H1 (cell line): ENCODE measurements at regions of chr1 and their contacts with region 1.

Region 1: DNA sequence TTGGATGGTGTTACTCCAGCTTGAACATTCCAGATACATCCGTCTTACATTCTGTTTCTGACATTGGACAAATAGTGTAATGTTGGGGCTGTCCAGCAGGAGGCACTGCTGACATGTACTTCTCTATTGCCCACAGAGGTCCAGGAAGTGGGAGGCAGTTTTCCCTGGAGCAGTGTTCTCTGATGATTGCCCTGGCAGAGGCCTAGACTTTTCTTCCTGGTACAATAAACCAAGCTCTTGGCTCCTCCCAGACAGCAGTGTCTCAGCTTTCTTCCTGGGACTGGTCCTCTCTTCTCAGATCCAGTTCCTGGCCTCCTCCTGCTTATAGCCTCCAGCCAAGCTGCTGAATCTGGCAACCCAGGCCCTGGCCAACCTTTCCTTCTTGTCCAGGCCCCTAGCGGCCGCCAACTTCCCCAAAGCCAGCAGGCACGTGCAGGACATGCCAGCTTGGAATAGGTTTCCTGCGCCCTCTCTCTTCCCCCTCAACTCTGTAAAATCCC is 14.9 kb upstream of the IFNLR1 start:
- DNase-seq: peak; percentile 56 to 93
- H3K4me3 ChIP-seq: no peak overlapping the region
- H3K27ac ChIP-seq: no peak overlapping the region
- H3K4me1 ChIP-seq: peaks cover 0 to 4% (median 2%) of the 10 kb centered on the region in 4 experiments; a peak in 2 of 7 replicates
- H3K27me3 ChIP-seq: no peaks in the 10 kb centered on the region
- CTCF ChIP-seq: peak; percentile 66 to 91 (median 83)
- EP300 ChIP-seq: no peak
- POLR2A ChIP-seq: no peak
- RAD21 ChIP-seq: peak; percentile 94 to 95

Region 2: GRCh38 chr1:24150234-24151174 is 51.5 kb before region 1 on chr1:
- CTCF ChIA-PET with region 1: interaction called, 85 read pairs
- POLR2A ChIA-PET with region 1: interaction called, 4 read pairs
- DNase-seq: peak; percentile 91 to 100
- H3K4me3 ChIP-seq: peak overlapping the region; percentile 19 to 58 (median 34); a peak in 6 of 8 replicates
- H3K27ac ChIP-seq: peak overlapping the region; percentile 97
- H3K4me1 ChIP-seq: peaks cover 3 to 23% (median 15%) of the 10 kb centered on the region in 4 experiments
- H3K27me3 ChIP-seq: no peaks in the 10 kb centered on the region
- CTCF ChIP-seq: peak; percentile 83 to 89 (median 88)
- EP300 ChIP-seq: no peak
- POLR2A ChIP-seq: peak; percentile 76 to 91
- RAD21 ChIP-seq: peak; percentile 55 to 70; a peak in 3 of 4 replicates

Region 3: GRCh38 chr1:24235921-24236781 is 34.2 kb after region 1 on chr1:
- CTCF ChIA-PET with region 1: interaction called, 14 read pairs
- POLR2A ChIA-PET with region 1: no interaction called
- DNase-seq: peak in 1 of 2 experiments; percentile 51
- H3K4me3 ChIP-seq: no peak overlapping the region
- H3K27ac ChIP-seq: no peak overlapping the region
- H3K4me1 ChIP-seq: peaks cover 0 to 6% (median 4%) of the 10 kb centered on the region in 4 experiments; a peak in 4 of 7 replicates
- H3K27me3 ChIP-seq: no peaks in the 10 kb centered on the region
- CTCF ChIP-seq: no peak
- EP300 ChIP-seq: no peak
- POLR2A ChIP-seq: no peak
- RAD21 ChIP-seq: no peak

Region 4: DNA sequence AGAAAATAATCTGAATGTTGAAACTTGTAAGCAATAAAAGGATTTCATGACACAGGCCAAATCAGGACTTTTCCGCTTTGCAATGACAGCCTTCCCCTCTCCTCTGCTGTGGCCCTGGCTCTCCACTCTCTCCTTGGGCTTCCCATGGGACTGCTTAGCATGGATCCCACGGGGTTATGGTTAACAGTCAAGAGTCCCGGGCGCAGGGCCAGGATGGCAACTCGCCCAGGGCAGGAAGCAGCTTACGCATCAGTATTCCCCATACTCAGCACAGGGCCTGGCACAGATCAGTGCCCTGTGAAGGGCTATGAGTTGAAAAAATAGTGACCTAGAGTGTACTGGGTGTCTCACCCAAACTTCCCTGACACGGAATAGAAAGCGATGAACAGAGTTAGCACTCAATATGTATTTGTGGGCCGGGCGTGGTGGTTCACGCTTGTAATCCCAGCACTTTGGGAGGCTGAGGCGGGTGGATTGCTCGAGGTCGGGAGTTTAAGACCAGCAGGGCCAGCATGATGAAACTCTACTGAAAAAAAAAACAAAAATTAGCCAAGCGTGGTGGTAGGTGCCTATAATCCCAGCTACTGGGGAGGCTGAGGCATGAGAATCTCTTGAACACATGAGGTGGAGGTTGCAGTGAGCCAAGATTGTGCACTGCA is 88.1 kb after region 1 on chr1:
- CTCF ChIA-PET with region 1: interaction called, 11 read pairs
- POLR2A ChIA-PET with region 1: no interaction called
- DNase-seq: no peak
- H3K4me3 ChIP-seq: no peak overlapping the region
- H3K27ac ChIP-seq: no peak overlapping the region
- H3K4me1 ChIP-seq: peaks cover 6 to 23% (median 11%) of the 10 kb centered on the region in 4 experiments
- H3K27me3 ChIP-seq: 0 out of 7 replicates have a peak, but pooled peaks cover 0 to 1% (median 0%) of the 10 kb centered on the region in 4 experiments
- CTCF ChIP-seq: no peak
- EP300 ChIP-seq: no peak
- POLR2A ChIP-seq: no peak
- RAD21 ChIP-seq: no peak

Region 5: GRCh38 chr1:24341260-24341659 is 139.3 kb after region 1 on chr1:
- CTCF ChIA-PET with region 1: interaction called, 27 read pairs
- POLR2A ChIA-PET with region 1: interaction called, 3 read pairs
- DNase-seq: no peak
- H3K4me3 ChIP-seq: no peak overlapping the region
- H3K27ac ChIP-seq: no peak overlapping the region
- H3K4me1 ChIP-seq: peaks cover 0 to 36% (median 24%) of the 10 kb centered on the region in 4 experiments; a peak in 6 of 7 replicates
- H3K27me3 ChIP-seq: no peaks in the 10 kb centered on the region
- CTCF ChIP-seq: no peak
- EP300 ChIP-seq: no peak
- POLR2A ChIP-seq: no peak
- RAD21 ChIP-seq: no peak

Region 6: DNA sequence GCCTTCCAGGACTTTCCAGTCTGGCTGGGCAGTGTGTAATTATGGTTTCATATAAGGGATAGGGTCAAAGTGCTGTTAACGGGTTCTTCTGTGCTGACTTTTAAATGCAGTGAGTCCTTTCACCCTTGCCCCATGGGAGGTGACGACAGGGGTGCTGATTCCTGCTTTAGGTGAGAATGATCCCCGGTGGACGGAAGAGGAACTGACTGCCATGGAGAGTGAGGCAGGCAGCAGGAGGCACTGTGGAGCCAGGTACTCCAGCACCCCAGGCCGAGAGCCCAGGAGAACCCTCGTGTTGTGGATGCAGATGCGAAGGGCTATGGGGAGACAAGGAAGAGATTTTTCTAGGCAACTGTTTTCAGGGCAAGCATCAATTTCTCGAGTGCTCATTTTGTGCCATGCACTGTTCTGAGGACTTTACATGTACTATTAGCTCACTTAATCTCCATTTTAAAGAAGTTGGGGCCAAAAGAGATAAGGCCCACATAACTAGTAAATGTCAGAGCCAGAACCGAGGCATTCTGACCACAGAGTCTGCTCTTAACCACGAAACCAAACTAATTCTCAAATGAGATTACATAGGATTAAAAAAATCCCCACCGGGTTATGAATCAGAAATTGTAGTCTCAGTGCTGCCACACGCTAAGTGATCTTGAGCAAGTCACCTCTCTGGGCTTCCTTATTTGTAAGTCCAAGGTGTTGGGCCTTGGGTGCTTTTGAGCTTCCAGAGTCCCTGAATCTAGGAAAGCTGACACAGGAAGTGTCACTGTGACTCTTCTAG is 183.4 kb after region 1 on chr1:
- CTCF ChIA-PET with region 1: interaction called, 465 read pairs
- POLR2A ChIA-PET with region 1: no interaction called
- DNase-seq: peak; percentile 47 to 77
- H3K4me3 ChIP-seq: no peak overlapping the region
- H3K27ac ChIP-seq: no peak overlapping the region
- H3K4me1 ChIP-seq: no peaks in the 10 kb centered on the region
- H3K27me3 ChIP-seq: no peaks in the 10 kb centered on the region
- CTCF ChIP-seq: peak; percentile 100
- EP300 ChIP-seq: no peak
- POLR2A ChIP-seq: no peak
- RAD21 ChIP-seq: peak; percentile 75 to 83

Region 7: DNA sequence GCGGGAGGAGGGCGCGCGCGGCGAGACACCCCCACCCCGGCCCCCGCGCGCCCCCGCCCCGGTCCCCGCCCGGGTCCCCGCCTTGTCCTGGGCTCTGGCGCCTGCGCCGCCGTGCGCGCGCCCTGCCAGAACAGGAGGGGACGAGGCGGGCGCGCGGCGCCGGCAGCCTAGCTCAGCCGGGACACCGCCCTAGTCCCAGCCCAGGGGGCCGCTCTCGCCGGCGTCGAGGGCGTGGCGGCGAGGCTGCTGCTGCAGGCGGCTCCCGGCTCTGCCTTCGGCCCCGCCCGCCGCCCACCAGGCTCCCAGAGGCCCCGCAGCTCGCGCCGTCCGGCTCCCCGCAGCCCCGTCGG is 300.7 kb after region 1 on chr1 and contains the start of gene RCAN3:
- CTCF ChIA-PET with region 1: no interaction called
- POLR2A ChIA-PET with region 1: no interaction called
- DNase-seq: peak; percentile 59 to 88
- H3K4me3 ChIP-seq: peak within 1 kb of the TSS; percentile 80 to 95 (median 86)
- H3K27ac ChIP-seq: no peak within 1 kb of the TSS
- H3K4me1 ChIP-seq: peaks cover 2 to 21% (median 11%) of the 10 kb centered on the region in 4 experiments; a peak in 6 of 7 replicates
- H3K27me3 ChIP-seq: peaks cover 0 to 7% (median 0%) of the 10 kb centered on the region in 4 experiments; a peak in 3 of 7 replicates
- CTCF ChIP-seq: no peak
- EP300 ChIP-seq: no peak
- POLR2A ChIP-seq: peak in 1 of 2 experiments; percentile 38; a peak in 1 of 3 replicates
- RAD21 ChIP-seq: no peak
- total RNA-seq, gene RCAN3: 15.2 and 16.6 TPM in 2 replicates